Activated naive CD4-positive, alpha-beta T cell treated with anti-CD3 and anti-CD28 coated beads for 36 hours (primary cell): ENCODE measurements at regions of chr11 and their contacts with region 1.

Region 1: GRCh38 chr11:9716275-9717039 is 52.6 kb downstream of the SWAP70 start:
- DNase-seq: peak; percentile 41
- H3K4me3 Mint-ChIP-seq: no peak overlapping the region
- H3K27ac Mint-ChIP-seq: peak overlapping the region; percentile 66
- H3K4me1 Mint-ChIP-seq: peaks cover 29% of the 10 kb centered on the region
- H3K27me3 Mint-ChIP-seq: peaks cover 4% of the 10 kb centered on the region

Region 2: DNA sequence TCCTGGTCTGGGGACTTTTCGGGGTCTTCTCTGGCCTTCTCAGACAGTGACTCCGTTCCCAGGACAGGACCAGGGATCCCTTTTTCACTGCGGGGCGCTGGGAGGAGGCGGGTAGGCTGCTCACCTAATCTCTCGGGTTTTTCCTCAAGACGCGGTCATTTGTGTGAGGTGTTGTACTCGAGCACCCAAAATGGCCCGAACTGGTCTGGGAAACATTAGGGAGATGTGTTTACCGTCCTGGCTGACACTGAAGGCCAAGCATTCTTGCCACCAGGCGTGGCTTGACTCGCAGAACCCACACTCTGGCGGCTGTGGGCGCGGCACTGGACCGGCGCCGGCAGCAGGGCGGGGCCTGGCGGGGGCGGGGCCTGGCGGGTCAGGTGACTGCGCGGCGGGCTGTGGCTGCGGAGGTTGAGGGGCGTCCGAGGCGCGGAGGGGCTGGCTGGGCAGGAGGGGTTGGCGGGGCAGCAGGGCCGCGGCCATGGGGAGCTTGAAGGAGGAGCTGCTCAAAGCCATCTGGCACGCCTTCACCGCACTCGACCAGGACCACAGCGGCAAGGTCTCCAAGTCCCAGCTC is 52.7 kb before region 1 on chr11 and contains the start of gene SWAP70:
- CTCF ChIA-PET with region 1: no interaction called
- intact Hi-C with region 1: loop called (anchors 2 kb)
- DNase-seq: peak; percentile 72
- H3K4me3 Mint-ChIP-seq: peak within 1 kb of the TSS; percentile 85
- H3K27ac Mint-ChIP-seq: peak within 1 kb of the TSS; percentile 53
- H3K4me1 Mint-ChIP-seq: peaks cover 17% of the 10 kb centered on the region
- H3K27me3 Mint-ChIP-seq: peaks cover 35% of the 10 kb centered on the region
- total RNA-seq, gene SWAP70: 8.2 to 9.5 TPM

Region 3: DNA sequence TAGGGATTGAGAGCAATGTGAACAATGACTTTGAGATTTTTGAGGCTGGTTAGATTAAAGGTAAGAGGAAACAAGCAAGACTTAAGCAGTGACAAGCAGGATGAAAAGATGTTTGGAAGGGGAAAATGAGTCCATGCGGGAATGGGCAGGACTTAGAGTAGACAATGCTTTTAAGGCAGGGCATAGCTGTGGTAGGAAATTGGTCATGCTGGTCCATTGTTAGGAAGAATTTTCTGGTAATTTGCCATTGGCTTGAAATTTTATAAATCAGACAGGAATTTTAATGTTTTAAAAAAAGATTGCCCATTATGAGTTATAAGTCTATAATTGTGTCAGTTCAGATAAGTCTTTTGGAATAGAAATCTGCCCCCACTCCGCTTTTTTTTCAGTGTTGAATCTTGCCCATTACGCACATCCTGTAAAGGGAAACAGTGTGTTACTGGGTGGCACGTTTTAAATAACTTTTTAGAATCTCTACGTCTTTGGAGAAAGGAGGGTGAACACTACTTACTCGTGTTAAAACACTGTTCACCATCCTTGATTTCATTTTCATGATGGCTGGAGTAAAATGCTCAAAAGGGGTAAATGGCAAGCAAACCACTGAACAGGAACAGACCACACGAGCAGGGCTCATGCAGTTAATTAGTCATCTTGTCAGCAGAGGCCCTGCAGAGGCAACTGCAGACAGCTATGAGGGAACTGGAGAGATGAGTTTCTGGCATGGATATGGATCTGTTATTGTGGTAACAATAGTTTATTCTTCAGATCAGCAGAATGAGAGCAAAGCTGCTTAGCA is 27.5 kb before region 1 on chr11:
- CTCF ChIA-PET with region 1: no interaction called
- intact Hi-C with region 1: loop called (anchors 1 kb)
- DNase-seq: peak; percentile 38
- H3K4me3 Mint-ChIP-seq: no peak overlapping the region
- H3K27ac Mint-ChIP-seq: no peak overlapping the region
- H3K4me1 Mint-ChIP-seq: peaks cover 2% of the 10 kb centered on the region
- H3K27me3 Mint-ChIP-seq: no peaks in the 10 kb centered on the region

Region 4: DNA sequence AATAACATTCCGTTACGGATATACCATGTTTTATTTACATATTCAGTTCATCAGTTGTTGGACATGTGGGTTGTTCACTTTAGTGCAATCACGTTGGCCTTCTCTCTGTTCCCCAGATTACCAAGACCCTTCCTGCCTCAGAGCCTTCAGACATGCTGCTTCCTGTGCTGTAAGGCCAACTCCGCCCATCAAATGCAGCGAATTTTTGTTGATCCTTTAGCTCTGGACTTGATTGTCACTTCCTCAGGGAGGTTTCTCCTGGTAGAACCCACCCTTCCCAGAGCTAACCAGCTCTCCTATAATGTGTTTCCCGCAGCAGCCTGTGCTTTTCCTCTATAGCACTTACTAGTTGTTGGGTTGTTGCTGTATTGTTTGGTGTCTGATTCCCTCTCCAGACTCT is 13.2 kb before region 1 on chr11:
- CTCF ChIA-PET with region 1: no interaction called
- intact Hi-C with region 1: loop called (anchors 1 kb)
- DNase-seq: no peak
- H3K4me3 Mint-ChIP-seq: no peak overlapping the region
- H3K27ac Mint-ChIP-seq: no peak overlapping the region
- H3K4me1 Mint-ChIP-seq: peaks cover 19% of the 10 kb centered on the region
- H3K27me3 Mint-ChIP-seq: no peaks in the 10 kb centered on the region

Region 5: GRCh38 chr11:9739123-9739894 is 22.9 kb after region 1 on chr11:
- CTCF ChIA-PET with region 1: no interaction called
- intact Hi-C with region 1: no loop called
- DNase-seq: no peak
- H3K4me3 Mint-ChIP-seq: no peak overlapping the region
- H3K27ac Mint-ChIP-seq: no peak overlapping the region
- H3K4me1 Mint-ChIP-seq: no peaks in the 10 kb centered on the region
- H3K27me3 Mint-ChIP-seq: no peaks in the 10 kb centered on the region

Region 6: DNA sequence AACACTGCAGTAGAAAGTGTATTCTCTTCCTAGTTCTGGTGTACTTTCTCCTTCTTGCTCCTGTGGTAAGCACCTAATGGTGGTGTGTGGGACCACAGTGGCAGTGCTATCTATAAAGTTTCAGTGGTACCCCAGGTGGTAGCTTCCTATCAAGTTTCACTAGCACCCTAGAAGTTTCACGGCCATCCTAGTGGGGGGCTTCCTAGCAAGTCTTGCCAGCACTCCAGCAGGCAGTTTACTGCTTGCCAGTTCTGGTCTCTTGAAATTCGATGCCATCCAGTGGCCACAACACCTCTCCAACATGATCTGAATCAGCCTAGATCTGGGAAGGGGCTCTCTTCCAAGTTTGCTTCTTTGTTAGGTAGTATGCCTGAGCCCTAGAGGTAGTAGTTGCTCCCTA is 177.0 kb after region 1 on chr11:
- CTCF ChIA-PET with region 1: no interaction called
- intact Hi-C with region 1: no loop called
- DNase-seq: no peak
- H3K4me3 Mint-ChIP-seq: no peak overlapping the region
- H3K27ac Mint-ChIP-seq: no peak overlapping the region
- H3K4me1 Mint-ChIP-seq: no peaks in the 10 kb centered on the region
- H3K27me3 Mint-ChIP-seq: no peaks in the 10 kb centered on the region